ENCODE measurements at regions of chr1 and their contacts with region 1.

Region 1: DNA sequence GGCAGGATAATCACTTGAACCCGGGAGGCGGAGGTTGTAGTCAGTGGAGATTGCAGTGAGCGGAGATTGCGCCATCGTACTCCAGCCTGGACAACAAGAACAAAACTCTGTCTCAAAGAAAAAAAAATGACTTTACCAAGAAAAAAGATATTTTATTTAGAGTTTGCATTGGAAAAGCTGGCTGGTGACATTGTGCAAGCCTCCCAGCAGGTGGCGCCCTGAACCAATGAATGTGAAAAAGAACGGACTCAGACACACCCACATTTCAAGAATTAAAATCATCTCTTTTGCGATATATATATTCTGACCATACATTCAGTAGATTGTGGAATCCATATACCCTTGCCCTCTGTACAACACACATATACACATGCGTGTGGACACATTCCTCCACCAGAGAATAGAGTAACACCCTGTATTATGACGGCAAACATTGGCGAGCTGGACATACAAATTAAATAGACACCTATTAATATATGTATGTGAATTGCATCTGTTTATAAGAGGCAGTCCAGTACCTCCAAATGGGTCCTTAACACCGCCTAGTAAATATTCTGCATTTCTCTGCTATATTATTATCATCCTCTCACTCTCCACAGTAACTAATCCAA is 39.0 kb upstream of the CADM3 start:
- DNase-seq: peak; percentile 15 to 72 (median 54)
- ATAC-seq: peak in 1 of 4 experiments; percentile 56
- H3K4me3 ChIP-seq: no peak overlapping the region
- H3K4me3 Mint-ChIP-seq: no peak overlapping the region
- H3K27ac ChIP-seq: no peak overlapping the region
- H3K27ac Mint-ChIP-seq: no peak overlapping the region
- H3K4me1 ChIP-seq: no peaks in the 10 kb centered on the region
- H3K4me1 Mint-ChIP-seq: no peaks in the 10 kb centered on the region
- H3K27me3 ChIP-seq: peaks cover 3 to 5% of the 10 kb centered on the region in 2 experiments
- H3K27me3 Mint-ChIP-seq: peaks cover 6% of the 10 kb centered on the region in 2 donors

Region 2: GRCh38 chr1:159056069-159056698 is 76.2 kb before region 1 on chr1:
- CTCF ChIA-PET with region 1: no interaction called
- POLR2A ChIA-PET with region 1: no interaction called
- DNase-seq: no peak
- ATAC-seq: no peak
- H3K4me3 ChIP-seq: no peak overlapping the region
- H3K4me3 Mint-ChIP-seq: no peak overlapping the region
- H3K27ac ChIP-seq: no peak overlapping the region
- H3K27ac Mint-ChIP-seq: peak overlapping the region; percentile 7 to 72
- H3K4me1 ChIP-seq: peaks cover 3 to 7% of the 10 kb centered on the region in 2 experiments
- H3K4me1 Mint-ChIP-seq: peaks cover 23 to 51% (median 38%) of the 10 kb centered on the region in 3 donors
- H3K27me3 ChIP-seq: no peaks in the 10 kb centered on the region
- H3K27me3 Mint-ChIP-seq: no peaks in the 10 kb centered on the region

Region 3: DNA sequence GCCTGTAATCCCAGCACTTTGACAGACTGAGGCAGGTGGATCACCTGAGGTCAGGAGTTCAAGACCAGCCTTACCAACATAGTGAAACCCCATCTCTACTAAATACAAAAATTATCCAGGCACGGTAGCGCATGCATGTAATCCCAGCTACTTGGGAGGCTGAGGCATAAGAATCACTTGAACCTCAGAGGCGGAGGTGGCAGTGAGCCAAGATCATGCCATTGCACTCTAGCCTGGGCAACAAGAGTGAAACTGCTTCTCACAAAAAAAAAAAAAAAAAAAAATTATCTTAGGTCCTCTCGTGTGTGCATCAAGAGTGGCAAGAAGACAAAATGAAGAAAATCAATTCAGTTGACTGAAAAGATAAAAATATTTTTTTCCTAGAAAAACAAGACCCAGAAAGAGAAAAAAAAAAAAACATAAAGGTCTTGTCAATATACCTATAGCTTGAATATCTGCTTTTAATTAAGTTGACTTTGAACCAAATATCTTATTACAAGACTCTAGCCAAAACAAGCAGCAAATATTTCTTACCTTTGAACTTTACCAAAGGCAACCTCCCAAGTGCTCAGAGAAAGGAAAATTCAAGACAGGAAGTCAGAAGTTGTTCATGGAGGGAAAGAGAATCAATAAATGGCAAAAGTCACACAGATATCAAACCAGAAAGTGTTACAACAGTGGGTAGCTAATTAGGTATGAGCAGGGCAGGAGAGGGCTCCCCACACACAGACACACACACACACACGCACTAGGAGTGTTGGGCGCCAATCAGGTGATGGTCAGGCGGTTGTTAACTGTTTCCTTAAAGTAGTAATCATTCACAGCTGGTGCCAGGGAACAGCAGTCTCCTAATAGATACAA is 1792.6 kb after region 1 on chr1:
- CTCF ChIA-PET with region 1: interaction called in 1 of 2 experiments, 11 read pairs
- POLR2A ChIA-PET with region 1: no interaction called
- DNase-seq: no peak
- ATAC-seq: no peak
- H3K4me3 ChIP-seq: no peak overlapping the region
- H3K4me3 Mint-ChIP-seq: no peak overlapping the region
- H3K27ac ChIP-seq: no peak overlapping the region
- H3K27ac Mint-ChIP-seq: no peak overlapping the region
- H3K4me1 ChIP-seq: no peaks in the 10 kb centered on the region
- H3K4me1 Mint-ChIP-seq: peaks cover 0 to 4% (median 0%) of the 10 kb centered on the region in 3 donors
- H3K27me3 ChIP-seq: peaks cover 0 to 9% of the 10 kb centered on the region in 2 experiments
- H3K27me3 Mint-ChIP-seq: peaks cover 3 to 5% of the 10 kb centered on the region in 2 donors

Measured in T-cell (primary cell).